AG04450 (cell line): ENCODE measurements at regions of chr17 and their contacts with region 1.

Region 1: GRCh38 chr17:7989781-7990655 is 12.4 kb upstream of the GUCY2D start:
- DNase-seq: no peak
- H3K4me3 ChIP-seq: peak overlapping the region; percentile 65
- H3K27ac ChIP-seq: no peak overlapping the region
- H3K27me3 ChIP-seq: peaks cover 10% of the 10 kb centered on the region
- CTCF ChIP-seq: peak; percentile 96

Region 2: DNA sequence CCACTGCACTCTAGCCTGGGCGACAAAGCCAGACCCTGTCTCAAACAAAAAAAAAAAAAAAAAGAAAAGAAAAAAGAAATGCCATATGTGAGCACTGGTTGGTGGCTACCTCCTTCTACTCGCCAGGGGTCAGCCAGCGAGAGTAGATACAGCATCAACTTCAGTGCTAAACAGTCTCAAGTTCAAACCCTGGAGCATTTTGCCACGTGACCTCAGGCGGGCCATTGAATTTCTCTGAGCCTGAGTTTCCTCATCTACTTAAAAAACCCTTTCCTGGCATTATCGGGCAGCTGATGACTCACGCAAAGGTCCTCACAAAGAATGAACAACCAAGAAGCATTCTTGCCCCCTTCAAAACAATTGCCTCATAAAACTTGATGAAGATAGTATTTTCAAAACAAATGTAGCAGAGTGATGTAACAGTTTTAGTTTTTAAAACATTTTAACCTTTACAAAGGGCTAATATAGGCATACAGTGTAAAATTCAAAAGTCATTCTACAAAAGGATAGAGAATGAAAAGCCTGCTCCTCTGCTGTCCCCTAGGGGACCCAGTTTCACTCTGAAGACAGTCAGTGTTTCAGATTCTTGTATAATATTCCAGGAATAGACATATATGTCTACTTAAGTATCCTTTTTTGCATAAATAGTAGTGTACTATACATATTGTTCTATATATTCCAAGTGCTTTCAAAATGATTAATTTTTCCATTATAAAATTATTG is 244.1 kb before region 1 on chr17:
- CTCF ChIA-PET with region 1: interaction called, 12 read pairs
- POLR2A ChIA-PET with region 1: no interaction called
- DNase-seq: peak; percentile 41
- H3K4me3 ChIP-seq: no peak overlapping the region
- H3K27ac ChIP-seq: no peak overlapping the region
- H3K27me3 ChIP-seq: no peaks in the 10 kb centered on the region
- CTCF ChIP-seq: peak; percentile 14; the same call in 1 of the 2 replicates

Region 3: DNA sequence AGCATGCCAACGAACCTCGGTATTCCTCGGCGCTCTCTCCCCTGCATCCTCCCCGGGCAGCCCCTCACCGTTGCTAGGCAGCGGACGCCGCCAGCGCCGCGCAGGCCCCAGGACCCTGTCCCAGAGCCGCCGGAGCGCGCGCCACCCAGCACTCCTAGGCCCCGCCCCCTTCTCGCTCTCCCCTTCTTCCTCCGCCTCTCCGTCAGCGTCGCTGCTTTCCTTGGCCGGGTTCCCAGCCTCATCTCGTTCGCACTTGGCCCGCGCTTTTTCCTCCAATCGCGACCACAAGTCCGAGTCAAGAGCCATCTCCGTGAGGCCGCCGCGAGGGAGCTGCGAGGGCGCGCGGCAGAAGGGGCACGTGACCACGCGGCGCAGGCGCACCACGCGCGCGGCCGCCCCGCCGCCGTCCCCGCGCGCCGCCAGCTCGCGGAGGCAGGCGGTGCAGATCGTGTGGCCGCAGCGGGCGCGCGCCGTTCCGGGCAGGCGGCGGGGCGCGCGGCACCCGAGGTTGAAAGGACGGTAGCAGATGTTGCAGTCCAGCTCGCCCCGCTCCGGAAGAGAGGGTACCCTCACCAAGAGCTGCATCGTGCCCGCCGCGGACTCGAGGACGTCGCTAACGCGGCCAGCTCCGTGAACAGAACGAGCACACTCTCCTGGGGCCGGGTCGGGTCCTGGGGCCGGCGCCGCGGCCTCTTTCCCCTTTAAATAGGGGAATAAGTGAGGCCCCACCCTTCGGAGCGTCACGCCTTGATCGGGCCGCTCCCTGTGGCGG is 74.2 kb before region 1 on chr17 and contains the start of gene RNF227:
- CTCF ChIA-PET with region 1: interaction called, 46 read pairs
- POLR2A ChIA-PET with region 1: interaction called, 6 read pairs
- DNase-seq: peak; percentile 92
- H3K4me3 ChIP-seq: peak within 1 kb of the TSS; percentile 74
- H3K27ac ChIP-seq: peak within 1 kb of the TSS; percentile 89
- H3K27me3 ChIP-seq: no peaks in the 10 kb centered on the region
- CTCF ChIP-seq: no peak
- polyA plus RNA-seq, gene RNF227: 1.3 and 1.4 TPM in 2 replicates

Region 4: GRCh38 chr17:7931709-7932482 is 58.1 kb before region 1 on chr17 and contains the starts of genes CNTROB and TRAPPC1:
- CTCF ChIA-PET with region 1: interaction called, 29 read pairs
- POLR2A ChIA-PET with region 1: no interaction called
- DNase-seq: peak; percentile 97
- H3K4me3 ChIP-seq: peak within 1 kb of the TSS; percentile 100
- H3K27ac ChIP-seq: peak within 1 kb of the TSS; percentile 70
- H3K27me3 ChIP-seq: no peaks in the 10 kb centered on the region
- CTCF ChIP-seq: no peak
- polyA plus RNA-seq, gene CNTROB: 11.3 and 12.9 TPM in 2 replicates
- polyA plus RNA-seq, gene TRAPPC1: 202 and 227 TPM in 2 replicates

Region 5: GRCh38 chr17:8041249-8041928 is 51.4 kb after region 1 on chr17:
- CTCF ChIA-PET with region 1: interaction called, 30 read pairs
- POLR2A ChIA-PET with region 1: no interaction called
- DNase-seq: peak; percentile 29
- H3K4me3 ChIP-seq: no peak overlapping the region
- H3K27ac ChIP-seq: peak overlapping the region; percentile 11
- H3K27me3 ChIP-seq: peaks cover 31% of the 10 kb centered on the region
- CTCF ChIP-seq: peak; percentile 65